ENCODE measurements at regions of chr3 and their contacts with region 1.

Region 1: DNA sequence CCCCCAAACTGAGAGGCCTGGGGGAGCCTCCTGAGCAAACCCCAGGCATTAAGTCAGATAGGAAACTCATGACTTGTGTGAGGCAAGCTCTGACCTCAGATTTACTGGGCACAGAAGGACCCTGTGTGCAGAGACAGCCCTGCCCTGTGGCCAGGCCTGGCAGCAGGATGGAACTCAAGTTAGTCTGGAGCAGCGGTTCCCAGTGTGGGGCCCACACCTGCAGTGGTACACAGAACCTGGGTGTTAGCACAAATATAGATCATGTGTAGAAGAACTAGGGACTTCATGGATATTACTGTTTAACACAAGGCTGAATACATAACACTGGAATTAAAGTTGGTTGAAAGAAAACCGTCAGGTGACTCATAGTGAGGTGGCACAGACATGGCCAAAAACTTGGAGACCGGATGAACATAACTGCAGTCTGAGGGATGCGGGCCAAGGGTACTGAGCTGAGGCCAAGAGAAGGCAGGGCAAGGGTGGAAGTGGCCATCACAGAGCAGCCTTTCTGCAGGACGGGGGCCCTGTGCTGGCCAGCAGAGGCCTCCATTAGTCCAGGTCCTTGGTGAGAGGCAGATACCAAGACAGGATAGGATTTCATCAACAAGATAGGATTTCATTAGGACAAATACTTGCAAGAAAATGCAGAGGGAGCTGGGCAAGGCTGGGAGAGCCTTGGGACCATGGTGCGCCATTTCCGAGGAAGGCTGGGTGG is 40.9 kb downstream of the IRAK2 start:
- DNase-seq: peak; percentile 95
- H3K4me3 ChIP-seq: no peak overlapping the region
- H3K27ac ChIP-seq: peak overlapping the region; percentile 95
- H3K4me1 ChIP-seq: peaks cover 29% of the 10 kb centered on the region
- H3K27me3 ChIP-seq: no peaks in the 10 kb centered on the region
- CTCF ChIP-seq: no peak

Region 2: DNA sequence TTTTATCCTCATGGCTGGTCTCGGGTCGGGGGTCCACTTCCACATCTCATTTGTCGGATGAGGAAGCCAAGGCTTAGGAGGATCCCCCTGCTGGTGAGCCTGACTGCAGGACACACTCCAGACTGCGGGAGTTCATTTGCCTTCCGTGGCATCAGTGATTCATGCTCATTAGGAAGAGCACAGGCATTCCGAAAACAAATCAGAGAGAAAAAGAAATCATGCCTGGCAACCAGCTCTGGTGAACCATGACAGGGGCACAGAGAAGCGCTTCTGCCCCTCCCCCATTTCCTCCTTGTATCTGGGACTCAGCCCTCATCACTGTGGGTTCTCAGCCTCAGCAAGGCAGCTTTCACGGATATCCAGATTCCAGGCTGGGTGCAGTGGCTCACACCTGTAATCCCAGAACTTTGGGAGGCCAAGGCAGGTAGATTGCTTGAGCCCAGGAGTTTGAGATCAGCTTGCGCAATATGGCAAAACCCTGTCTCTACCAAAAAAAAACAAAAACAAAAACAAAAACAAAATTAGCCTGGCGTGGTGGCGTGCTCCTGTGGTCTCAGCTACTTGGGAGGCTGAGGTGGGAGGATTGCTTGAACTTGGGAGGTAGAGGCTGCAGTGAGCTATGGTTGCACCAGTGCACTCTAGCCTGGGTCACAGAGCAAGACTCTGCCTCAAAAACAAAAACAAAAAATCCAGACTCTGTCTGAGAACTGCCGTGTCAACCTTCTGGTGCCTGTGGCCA is 12.5 kb before region 1 on chr3:
- CTCF ChIA-PET with region 1: no interaction called
- dilution Hi-C with region 1: no loop called
- in situ Hi-C with region 1: no loop called
- intact Hi-C with region 1: loop called (anchors 1 kb)
- DNase-seq: peak; percentile 64
- H3K4me3 ChIP-seq: no peak overlapping the region
- H3K27ac ChIP-seq: peak overlapping the region; percentile 99
- H3K4me1 ChIP-seq: peaks cover 68% of the 10 kb centered on the region
- H3K27me3 ChIP-seq: no peaks in the 10 kb centered on the region
- CTCF ChIP-seq: peak; percentile 49 to 51

Region 3: DNA sequence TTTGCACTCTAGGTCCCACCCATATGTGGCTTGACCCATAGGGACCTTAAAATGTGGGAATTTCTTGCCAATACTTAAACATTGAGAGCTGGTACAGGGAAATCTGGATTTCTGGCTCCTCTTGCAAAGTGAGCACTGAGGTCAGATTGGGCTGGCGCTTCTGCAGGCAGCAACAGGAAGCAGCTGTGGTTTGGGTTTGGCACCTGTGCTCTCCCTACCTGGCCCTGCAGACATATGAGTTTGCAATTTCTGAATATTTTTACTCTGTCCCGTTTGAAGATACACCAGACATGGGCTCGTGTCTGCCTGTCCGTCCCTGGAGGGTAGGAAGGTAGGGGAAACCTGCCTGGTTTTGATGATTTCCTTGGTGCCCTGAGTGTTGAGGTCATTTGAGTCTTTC is 190.1 kb after region 1 on chr3:
- CTCF ChIA-PET with region 1: no interaction called
- dilution Hi-C with region 1: no loop called
- in situ Hi-C with region 1: no loop called
- intact Hi-C with region 1: no loop called
- DNase-seq: peak; percentile 35
- H3K4me3 ChIP-seq: no peak overlapping the region
- H3K27ac ChIP-seq: no peak overlapping the region
- H3K4me1 ChIP-seq: peaks cover 6% of the 10 kb centered on the region
- H3K27me3 ChIP-seq: peaks cover 3% of the 10 kb centered on the region
- CTCF ChIP-seq: no peak